Transverse colon (tissue), 4 donors: ENCODE measurements at regions of chr15 and their contacts with region 1.

Region 1: DNA sequence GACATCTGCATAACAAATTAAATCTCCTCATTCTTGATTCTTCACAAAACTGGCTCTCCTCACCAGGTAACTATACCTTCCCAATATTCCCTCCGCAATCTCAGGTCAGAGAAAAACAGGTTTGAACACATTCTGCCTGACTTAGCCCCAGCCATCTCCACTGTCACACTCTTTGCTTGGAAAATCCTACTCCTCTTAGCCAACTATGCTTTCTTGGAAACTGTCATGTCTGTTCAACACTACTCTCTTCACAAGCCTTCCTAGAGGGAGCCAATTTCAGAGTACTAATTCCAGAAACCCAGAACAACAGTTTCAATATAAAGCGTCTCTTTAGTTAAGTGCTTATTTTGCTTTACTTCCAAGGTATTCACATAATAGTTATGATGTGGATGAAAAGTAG is 21.7 kb downstream of the MTMR10 start:
- DNase-seq: no peak
- H3K4me3 ChIP-seq: no peak overlapping the region
- H3K27ac ChIP-seq: no peak overlapping the region
- H3K4me1 ChIP-seq: no peaks in the 10 kb centered on the region
- H3K27me3 ChIP-seq: no peaks in the 10 kb centered on the region
- CTCF ChIP-seq: no peak
- EP300 ChIP-seq: no peak
- POLR2A ChIP-seq: no peak

Region 2: GRCh38 chr15:31013538-31014228 is 44.0 kb after region 1 on chr15:
- in situ Hi-C with region 1: no loop called
- intact Hi-C with region 1: loop called (anchors 1 kb)
- DNase-seq: no peak
- H3K4me3 ChIP-seq: no peak overlapping the region
- H3K27ac ChIP-seq: no peak overlapping the region
- H3K4me1 ChIP-seq: peaks cover 0 to 2% (median 0%) of the 10 kb centered on the region in 4 donors
- H3K27me3 ChIP-seq: no peaks in the 10 kb centered on the region
- CTCF ChIP-seq: no peak
- EP300 ChIP-seq: no peak
- POLR2A ChIP-seq: no peak

Region 3: DNA sequence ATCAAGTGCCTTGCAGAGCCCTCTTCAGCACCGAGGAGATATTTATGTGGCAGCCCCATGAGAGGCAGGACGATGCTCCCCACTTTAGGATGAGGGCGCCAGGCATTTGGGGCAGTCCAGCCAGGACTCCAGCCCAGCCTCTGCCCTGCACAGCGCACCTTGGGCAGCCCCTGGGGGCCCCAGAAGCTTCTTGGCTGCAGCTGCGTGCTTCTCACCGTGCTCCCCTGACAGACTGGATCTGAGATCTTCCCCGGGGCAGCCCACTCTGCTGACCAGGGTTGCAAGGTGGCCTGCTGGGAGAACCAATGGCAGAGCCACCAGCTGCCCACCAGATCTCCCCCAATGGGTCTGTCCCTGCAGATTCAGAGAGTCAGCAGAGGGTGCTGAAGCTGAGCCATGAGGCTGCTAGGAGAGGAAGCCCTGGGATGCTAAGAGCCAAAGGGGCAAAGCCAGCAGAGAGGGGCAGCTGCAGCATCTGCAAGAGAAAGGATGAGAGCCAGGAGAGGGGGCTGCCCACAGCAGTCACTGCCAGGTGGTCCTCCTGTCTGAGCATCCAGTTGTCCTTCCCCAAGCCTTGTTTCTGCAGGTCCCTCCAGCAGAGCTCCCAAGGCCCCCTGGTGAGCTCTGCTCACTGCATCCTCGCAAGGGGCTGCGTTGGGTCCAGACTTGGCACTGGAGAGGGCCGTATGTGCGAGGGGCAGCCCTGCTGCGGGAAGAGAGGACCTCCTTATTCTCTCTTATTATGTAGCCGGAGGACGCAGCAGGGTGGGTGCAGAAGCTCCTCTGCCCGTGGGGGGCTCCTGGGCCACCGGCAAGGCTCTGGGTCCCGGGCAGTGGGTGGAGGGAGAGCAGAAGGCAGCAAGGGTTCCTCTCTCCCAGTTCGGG is 342.3 kb after region 1 on chr15:
- in situ Hi-C with region 1: no loop called
- intact Hi-C with region 1: no loop called
- DNase-seq: no peak
- H3K4me3 ChIP-seq: no peak overlapping the region
- H3K27ac ChIP-seq: no peak overlapping the region
- H3K4me1 ChIP-seq: no peaks in the 10 kb centered on the region
- H3K27me3 ChIP-seq: peaks cover 4% of the 10 kb centered on the region
- CTCF ChIP-seq: no peak
- EP300 ChIP-seq: no peak
- POLR2A ChIP-seq: no peak